Stomach (tissue), 19 donors: ENCODE measurements at regions of chr14 and their contacts with region 1.

Region 1: DNA sequence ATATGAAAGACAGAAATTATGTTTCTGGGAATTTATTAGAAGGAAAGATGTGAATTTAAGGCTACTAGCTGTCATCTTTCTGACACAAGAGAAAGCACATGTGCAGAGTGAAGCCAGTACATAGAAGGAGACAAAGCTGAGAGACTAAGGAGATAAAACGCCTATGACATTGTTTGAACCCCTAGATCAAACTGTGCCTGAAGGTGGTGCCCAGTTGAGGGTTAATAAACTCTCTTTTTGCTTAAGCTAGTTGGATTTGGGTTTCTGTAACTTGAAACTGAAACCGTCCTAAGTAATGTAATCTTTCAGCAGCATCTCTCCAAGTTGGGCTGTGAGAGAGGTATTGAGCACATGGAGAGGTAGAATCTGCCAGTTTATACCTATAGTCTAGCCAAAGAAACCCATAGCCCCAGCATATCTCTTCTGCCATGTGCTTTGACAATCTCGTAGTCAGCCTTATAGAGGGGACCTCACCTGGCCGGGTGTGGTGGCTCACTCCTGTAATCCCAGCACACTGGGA is 84.2 kb downstream of the LRRC74A start:
- DNase-seq: no peak
- H3K4me3 ChIP-seq: no peak overlapping the region
- H3K27ac ChIP-seq: no peak overlapping the region
- H3K4me1 ChIP-seq: peaks cover 15 to 30% (median 21%) of the 10 kb centered on the region in 4 donors
- H3K27me3 ChIP-seq: no peaks in the 10 kb centered on the region
- CTCF ChIP-seq: no peak
- EP300 ChIP-seq: no peak
- POLR2A ChIP-seq: no peak

Region 2: DNA sequence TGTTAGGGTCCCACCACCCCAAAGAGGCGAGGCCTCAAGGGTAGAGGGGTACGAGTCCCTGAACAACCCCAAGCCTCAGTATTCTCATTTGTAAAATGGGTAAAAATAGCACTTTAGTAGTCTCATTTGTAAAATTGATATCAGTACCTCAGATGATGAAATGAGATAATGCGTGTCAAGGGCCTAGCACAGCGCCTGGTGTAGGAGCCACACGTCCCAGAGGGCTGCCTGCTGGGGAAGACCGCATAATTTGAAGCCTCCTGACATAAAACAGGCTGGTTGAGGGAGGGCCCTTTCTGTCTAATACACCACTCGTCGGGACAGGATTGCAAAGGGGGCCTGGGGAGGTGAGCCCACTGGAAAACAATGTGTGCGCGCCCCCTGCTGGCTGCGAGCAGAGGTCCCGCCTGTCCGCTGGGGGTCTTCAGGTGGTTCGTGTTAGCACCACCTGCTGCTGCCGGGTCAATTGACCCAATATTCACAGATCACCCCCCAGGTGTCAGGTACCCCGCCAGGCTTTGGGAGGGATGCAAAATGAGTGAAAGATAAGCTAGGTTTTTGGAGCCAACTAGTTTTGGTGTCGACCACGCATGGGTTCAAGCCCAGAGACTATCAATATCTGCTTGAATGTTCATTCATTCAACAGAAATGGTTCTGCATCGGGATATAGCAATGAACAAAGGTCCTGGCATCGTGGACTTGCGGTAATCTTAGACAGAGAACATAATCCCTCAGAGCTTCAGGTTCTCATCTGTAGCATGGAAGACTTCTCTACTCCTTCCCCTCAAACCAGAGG is 142.8 kb after region 1 on chr14:
- intact Hi-C with region 1: loop called (anchors 5 kb)
- DNase-seq: peak; percentile 64 to 93
- H3K4me3 ChIP-seq: no peak overlapping the region
- H3K27ac ChIP-seq: peak overlapping the region in 4 of 5 donors; percentile 56 to 80 (median 68)
- H3K4me1 ChIP-seq: peaks cover 17 to 29% (median 21%) of the 10 kb centered on the region in 4 donors
- H3K27me3 ChIP-seq: no peaks in the 10 kb centered on the region
- CTCF ChIP-seq: peak in 5 of 7 experiments; percentile 81 to 97 (median 93)
- EP300 ChIP-seq: no peak
- POLR2A ChIP-seq: no peak